ENCODE measurements at regions of chr2 and their contacts with region 1.

Region 1: DNA sequence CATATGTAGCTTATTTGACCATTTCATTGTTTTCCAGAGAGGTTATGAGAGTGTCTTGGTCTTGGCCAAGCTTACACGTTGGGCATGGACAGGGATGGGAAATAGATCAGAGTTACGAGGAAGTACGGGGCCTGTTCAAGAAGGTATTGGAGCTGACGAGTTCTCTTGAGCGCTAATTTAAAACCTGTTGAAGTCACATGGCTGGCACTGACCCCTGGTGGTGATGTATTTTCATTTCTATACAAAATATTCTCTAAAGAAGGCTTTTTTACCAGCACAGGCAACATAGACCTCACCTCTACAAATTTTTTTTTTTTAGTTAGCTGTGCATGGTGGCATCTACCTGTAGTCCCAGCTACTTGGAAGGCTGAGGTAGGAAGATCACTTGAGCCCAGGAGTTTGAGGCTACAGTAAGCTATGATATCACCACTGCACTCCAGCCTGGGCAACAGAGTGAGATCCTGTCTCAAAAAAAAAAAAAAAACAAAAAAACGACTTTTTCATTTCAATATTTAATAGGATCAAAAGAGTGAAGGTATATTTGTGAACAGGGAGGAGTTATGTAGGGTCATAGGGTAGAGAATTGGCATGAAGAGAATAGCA is 19.6 kb downstream of the UGP2 start:
- DNase-seq: no peak

Region 2: GRCh38 chr2:63692002-63692606 is 169.2 kb before region 1 on chr2:
- intact Hi-C with region 1: loop called in 1 of 2 experiments (anchors 5 kb)
- DNase-seq: no peak

Region 3: GRCh38 chr2:64133828-64134227 is 272.5 kb after region 1 on chr2:
- intact Hi-C with region 1: no loop called
- DNase-seq: no peak

Region 4: DNA sequence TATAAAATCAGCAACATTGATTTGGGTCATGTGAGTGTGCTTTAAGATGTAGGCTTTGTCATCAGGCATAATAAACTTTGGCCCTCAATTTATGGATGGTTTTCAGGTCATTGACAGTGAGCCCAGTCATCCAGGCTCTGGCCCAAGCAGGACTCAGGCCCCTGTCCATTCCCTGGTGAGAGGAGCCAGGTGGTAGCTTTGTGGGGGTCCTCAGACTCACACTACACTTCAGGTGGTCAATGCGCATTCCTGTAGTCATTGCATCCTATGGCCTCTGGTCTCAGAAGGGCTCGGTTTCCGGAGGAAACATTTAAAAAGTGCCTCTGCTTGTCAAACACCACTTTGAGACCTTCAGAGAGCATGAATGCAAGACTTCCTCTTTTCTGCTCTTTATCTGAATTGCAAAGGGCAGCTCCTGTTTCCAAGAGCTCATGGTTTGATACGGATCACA is 612.8 kb after region 1 on chr2:
- intact Hi-C with region 1: no loop called
- DNase-seq: no peak

Measured in posterior vena cava (tissue), 2 donors.